GM10248 (cell line): ENCODE measurements at regions of chr14 and their contacts with region 1.

Region 1: DNA sequence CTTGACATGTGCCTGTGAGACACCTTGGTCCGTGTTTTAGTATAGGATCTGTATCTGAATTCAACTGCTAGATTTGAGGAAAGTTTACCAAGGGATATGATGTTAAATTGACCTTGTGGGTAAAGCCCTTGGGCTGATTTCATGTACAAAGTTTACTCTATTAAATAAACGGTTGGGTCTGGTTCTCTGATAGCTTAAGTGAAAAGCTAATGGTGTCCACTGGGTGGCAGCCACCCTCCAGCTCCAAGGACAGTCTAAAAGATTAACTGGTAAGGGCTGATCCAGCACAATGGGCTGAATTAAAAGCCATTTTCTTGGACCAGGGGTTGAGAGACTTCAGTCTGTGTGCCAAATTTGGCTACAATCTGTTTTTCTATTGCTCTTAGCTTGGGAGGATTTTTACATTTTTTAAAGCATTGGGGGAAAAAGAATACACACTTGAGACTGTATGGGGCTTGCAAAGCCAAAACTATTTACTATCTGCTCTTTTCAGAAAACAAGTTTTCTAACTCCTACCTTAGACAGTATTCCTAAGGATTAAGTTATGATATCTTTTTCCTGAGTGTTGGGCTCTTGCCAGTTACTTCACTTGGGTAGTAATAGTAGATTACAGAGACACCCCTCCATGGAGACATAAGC is 116.5 kb downstream of the GPHN start:
- DNase-seq: peak; percentile 43
- CTCF ChIP-seq: peak; percentile 45

Region 2: GRCh38 chr14:66634876-66635834 is 10.7 kb after region 1 on chr14:
- CTCF ChIA-PET with region 1: interaction called, 11 read pairs
- POLR2A ChIA-PET with region 1: no interaction called
- DNase-seq: no peak
- CTCF ChIP-seq: no peak

Region 3: GRCh38 chr14:67285876-67286452 is 661.5 kb after region 1 on chr14:
- CTCF ChIA-PET with region 1: interaction called, 13 read pairs
- POLR2A ChIA-PET with region 1: no interaction called
- DNase-seq: peak; percentile 30
- CTCF ChIP-seq: peak; percentile 35